Calu3 (cell line): ENCODE measurements at regions of chr15 and their contacts with region 1.

Region 1: DNA sequence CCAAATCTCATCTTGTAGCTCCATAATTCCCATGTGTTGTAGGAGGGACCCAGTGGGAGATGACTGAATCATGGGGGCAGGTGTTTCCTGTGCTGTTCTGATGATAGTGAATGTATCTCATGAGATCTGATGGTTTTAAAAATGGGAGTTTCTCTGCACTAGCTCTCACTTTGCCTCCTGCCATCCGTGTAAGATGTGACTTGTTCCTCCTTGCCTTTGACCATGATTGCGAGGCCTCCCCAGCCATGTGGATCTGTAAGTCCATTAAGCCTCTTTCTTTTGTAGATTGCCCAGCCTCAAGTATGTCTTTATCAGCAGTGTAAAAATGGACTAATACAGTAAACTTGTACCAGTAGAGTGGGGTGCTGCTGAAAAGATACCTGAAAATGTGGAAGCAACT is 44.5 kb downstream of the DUT start:
- DNase-seq: no peak
- H3K4me3 Mint-ChIP-seq: no peak overlapping the region
- H3K27ac Mint-ChIP-seq: no peak overlapping the region
- H3K4me1 Mint-ChIP-seq: peaks cover 11% of the 10 kb centered on the region
- H3K27me3 Mint-ChIP-seq: peaks cover 51% of the 10 kb centered on the region
- CTCF ChIP-seq: no peak

Region 2: DNA sequence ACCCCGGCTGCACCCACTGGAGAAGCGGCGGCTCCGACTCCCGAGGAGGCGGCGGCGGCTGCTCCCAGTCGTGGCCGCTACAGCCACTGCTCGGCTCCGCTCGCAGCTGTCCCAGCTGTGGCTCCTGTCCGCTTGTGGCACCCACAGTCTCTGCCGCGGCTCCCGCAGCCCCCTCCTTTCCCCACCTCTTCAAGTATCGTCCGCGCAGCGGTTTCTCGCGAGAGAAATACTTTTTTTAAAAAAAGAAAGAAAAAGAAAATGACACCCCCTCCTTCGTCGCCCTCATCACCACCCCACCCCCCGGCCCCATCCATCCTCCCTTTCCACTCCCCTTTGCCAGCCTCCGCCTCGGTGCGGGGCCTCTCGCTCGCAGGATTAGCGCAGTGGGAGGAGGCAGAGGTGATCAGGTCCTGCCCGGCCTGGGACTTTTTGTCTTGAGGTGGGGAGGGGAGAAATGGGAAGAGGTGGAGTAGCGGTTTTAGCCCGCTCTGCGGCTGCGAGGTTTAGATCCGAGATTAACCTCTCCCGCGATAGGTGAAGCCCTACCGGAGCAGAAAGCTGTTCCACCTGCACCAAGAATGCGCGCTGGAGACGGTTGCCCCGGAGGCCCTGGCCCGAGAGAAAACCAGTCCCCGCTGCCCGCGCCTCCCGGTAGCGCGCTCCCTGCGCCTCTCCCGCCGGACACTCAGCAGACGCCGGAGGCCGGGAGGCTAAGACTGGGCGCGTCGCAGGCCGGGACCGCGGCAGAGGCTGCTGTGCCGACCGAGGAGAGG is 270.0 kb after region 1 on chr15 and contains the start of gene FBN1:
- CTCF ChIA-PET with region 1: no interaction called
- intact Hi-C with region 1: loop called (anchors 5 kb)
- DNase-seq: peak; percentile 36
- H3K4me3 Mint-ChIP-seq: peak within 1 kb of the TSS; percentile 58
- H3K27ac Mint-ChIP-seq: no peak within 1 kb of the TSS
- H3K4me1 Mint-ChIP-seq: no peaks in the 10 kb centered on the region
- H3K27me3 Mint-ChIP-seq: peaks cover 35% of the 10 kb centered on the region
- CTCF ChIP-seq: no peak
- total RNA-seq, gene FBN1: 0.93 and 1.1 TPM in 2 replicates

Region 3: GRCh38 chr15:48785195-48785594 is 409.4 kb after region 1 on chr15:
- CTCF ChIA-PET with region 1: no interaction called
- intact Hi-C with region 1: no loop called
- DNase-seq: no peak
- H3K4me3 Mint-ChIP-seq: no peak overlapping the region
- H3K27ac Mint-ChIP-seq: no peak overlapping the region
- H3K4me1 Mint-ChIP-seq: no peaks in the 10 kb centered on the region
- H3K27me3 Mint-ChIP-seq: no peaks in the 10 kb centered on the region
- CTCF ChIP-seq: no peak